Activated naive CD4-positive, alpha-beta T cell treated with anti-CD3 and anti-CD28 coated beads for 36 hours (primary cell): ENCODE measurements at regions of chr16 and their contacts with region 1.

Region 1: DNA sequence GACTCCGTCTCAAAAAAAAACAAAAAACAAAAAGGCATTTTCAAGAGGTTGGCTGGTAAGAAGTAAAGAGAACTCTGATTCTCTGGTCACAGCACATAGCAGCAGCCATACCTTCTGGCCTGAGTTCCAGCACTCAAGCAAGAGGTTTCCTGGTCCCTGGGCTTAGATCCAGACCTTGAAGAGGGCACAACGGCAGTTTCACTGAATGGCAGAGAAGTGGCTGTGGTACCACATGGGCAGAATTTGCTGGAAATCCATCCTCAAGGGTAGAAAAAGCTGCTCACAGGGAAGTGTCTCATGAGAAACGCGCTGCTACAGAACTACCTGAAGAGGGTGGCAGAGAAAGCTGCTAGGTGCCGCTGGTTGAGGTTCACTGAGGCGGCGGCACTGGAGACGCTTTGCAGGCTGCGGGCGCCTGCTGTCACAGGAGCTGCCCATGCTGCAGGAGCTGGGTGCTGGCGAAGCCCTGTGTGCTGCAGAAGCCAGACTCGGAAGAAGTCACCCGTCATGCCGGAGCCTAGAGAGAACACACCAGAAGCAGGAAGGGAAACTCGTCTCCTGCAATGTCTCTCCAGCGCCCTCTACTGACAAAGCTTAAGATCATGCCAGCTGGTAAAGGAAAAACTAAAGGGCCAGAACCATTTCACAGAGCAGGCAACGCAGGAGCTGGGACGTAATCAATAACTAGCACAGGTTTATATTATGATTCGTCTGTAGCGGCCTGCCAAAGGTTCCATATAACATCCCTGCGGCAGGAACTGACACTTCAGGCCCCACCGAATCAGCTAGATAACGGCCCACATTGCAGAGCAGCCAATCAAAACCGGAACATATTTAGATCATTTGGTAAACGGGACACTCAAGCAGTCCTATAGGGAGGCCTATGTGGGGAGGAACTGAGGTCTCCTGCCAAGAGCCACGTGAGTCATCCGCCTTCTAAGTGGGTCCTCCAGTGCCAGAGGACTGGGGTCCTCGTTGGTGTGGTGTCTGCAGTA is 5.4 kb upstream of the ZNF213 start:
- DNase-seq: peak; percentile 87
- H3K4me3 Mint-ChIP-seq: peak overlapping the region; percentile 95
- H3K27ac Mint-ChIP-seq: peak overlapping the region; percentile 90
- H3K4me1 Mint-ChIP-seq: peaks cover 53% of the 10 kb centered on the region
- H3K27me3 Mint-ChIP-seq: no peaks in the 10 kb centered on the region

Region 2: GRCh38 chr16:2364638-2365210 is 764.7 kb before region 1 on chr16:
- CTCF ChIA-PET with region 1: no interaction called
- intact Hi-C with region 1: no loop called
- DNase-seq: no peak
- H3K4me3 Mint-ChIP-seq: no peak overlapping the region
- H3K27ac Mint-ChIP-seq: no peak overlapping the region
- H3K4me1 Mint-ChIP-seq: no peaks in the 10 kb centered on the region
- H3K27me3 Mint-ChIP-seq: peaks cover 16% of the 10 kb centered on the region

Region 3: GRCh38 chr16:3059000-3059722 is 70.3 kb before region 1 on chr16:
- CTCF ChIA-PET with region 1: interaction called, 187 read pairs
- intact Hi-C with region 1: loop called (anchors 1 kb)
- DNase-seq: peak; percentile 85
- H3K4me3 Mint-ChIP-seq: peak overlapping the region; percentile 89
- H3K27ac Mint-ChIP-seq: peak overlapping the region; percentile 91
- H3K4me1 Mint-ChIP-seq: peaks cover 48% of the 10 kb centered on the region
- H3K27me3 Mint-ChIP-seq: no peaks in the 10 kb centered on the region

Region 4: GRCh38 chr16:3094289-3095027 is 35.0 kb before region 1 on chr16:
- CTCF ChIA-PET with region 1: interaction called, 122 read pairs
- intact Hi-C with region 1: loop called (anchors 1 kb)
- DNase-seq: peak; percentile 80
- H3K4me3 Mint-ChIP-seq: no peak overlapping the region
- H3K27ac Mint-ChIP-seq: no peak overlapping the region
- H3K4me1 Mint-ChIP-seq: peaks cover 23% of the 10 kb centered on the region
- H3K27me3 Mint-ChIP-seq: no peaks in the 10 kb centered on the region

Region 5: GRCh38 chr16:3106205-3106928 is 23.1 kb before region 1 on chr16:
- CTCF ChIA-PET with region 1: interaction called, 122 read pairs
- intact Hi-C with region 1: no loop called
- DNase-seq: peak; percentile 93
- H3K4me3 Mint-ChIP-seq: peak overlapping the region; percentile 81
- H3K27ac Mint-ChIP-seq: peak overlapping the region; percentile 90
- H3K4me1 Mint-ChIP-seq: peaks cover 24% of the 10 kb centered on the region
- H3K27me3 Mint-ChIP-seq: no peaks in the 10 kb centered on the region

Region 6: GRCh38 chr16:3150346-3151218 is 21.1 kb after region 1 on chr16:
- CTCF ChIA-PET with region 1: interaction called, 62 read pairs
- intact Hi-C with region 1: loop called (anchors 1 kb)
- DNase-seq: peak; percentile 100
- H3K4me3 Mint-ChIP-seq: peak overlapping the region; percentile 88
- H3K27ac Mint-ChIP-seq: peak overlapping the region; percentile 86
- H3K4me1 Mint-ChIP-seq: peaks cover 21% of the 10 kb centered on the region
- H3K27me3 Mint-ChIP-seq: peaks cover 4% of the 10 kb centered on the region

Region 7: DNA sequence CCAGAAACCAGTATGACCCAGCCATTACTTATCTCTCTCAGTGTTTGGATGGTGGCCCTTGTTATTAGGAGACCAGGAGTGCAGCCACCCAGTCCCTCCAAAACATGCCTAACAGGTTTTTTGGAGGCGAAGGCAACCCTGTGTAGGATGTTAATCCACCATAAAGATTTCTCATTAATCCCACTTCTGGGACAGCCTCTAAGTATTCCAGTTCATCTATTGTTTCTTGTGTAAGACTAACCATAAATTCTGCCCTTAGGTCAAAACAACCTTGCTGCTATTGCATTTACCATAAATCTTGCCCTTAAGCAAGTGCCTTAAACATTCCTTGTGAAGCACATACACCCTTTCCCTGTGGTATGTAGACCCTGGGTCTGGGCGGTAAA is 37.1 kb after region 1 on chr16:
- CTCF ChIA-PET with region 1: interaction called, 37 read pairs
- intact Hi-C with region 1: loop called (anchors 1 kb)
- DNase-seq: no peak
- H3K4me3 Mint-ChIP-seq: no peak overlapping the region
- H3K27ac Mint-ChIP-seq: no peak overlapping the region
- H3K4me1 Mint-ChIP-seq: peaks cover 19% of the 10 kb centered on the region
- H3K27me3 Mint-ChIP-seq: peaks cover 12% of the 10 kb centered on the region